Caco-2 (cell line): ENCODE measurements at regions of chr5 and their contacts with region 1.

Region 1: GRCh38 chr5:43120720-43121564 is at the start of gene ZNF131:
- DNase-seq: peak; percentile 95 to 97
- H3K4me3 ChIP-seq: peak within 1 kb of the TSS; percentile 90
- H3K4me3 Mint-ChIP-seq: peak within 1 kb of the TSS; percentile 93
- H3K27ac Mint-ChIP-seq: peak within 1 kb of the TSS; percentile 95
- H3K4me1 ChIP-seq: peaks cover 21% of the 10 kb centered on the region
- H3K4me1 Mint-ChIP-seq: peaks cover 12% of the 10 kb centered on the region
- H3K27me3 ChIP-seq: no peaks in the 10 kb centered on the region
- H3K27me3 Mint-ChIP-seq: peaks cover 3% of the 10 kb centered on the region
- CTCF ChIP-seq: no peak
- total RNA-seq, gene ZNF131: 53.6 and 53.7 TPM in 2 replicates

Region 2: GRCh38 chr5:42908509-42909488 is 212.1 kb before region 1 on chr5:
- CTCF ChIA-PET with region 1: no interaction called
- POLR2A ChIA-PET with region 1: interaction called, 15 read pairs
- intact Hi-C with region 1: loop called (anchors 5 kb)
- DNase-seq: peak; percentile 89 to 90
- H3K4me3 ChIP-seq: peak overlapping the region; percentile 38
- H3K4me3 Mint-ChIP-seq: peak overlapping the region; percentile 97
- H3K27ac Mint-ChIP-seq: peak overlapping the region; percentile 64
- H3K4me1 ChIP-seq: peaks cover 5% of the 10 kb centered on the region; the same call in 1 of the 2 replicates
- H3K4me1 Mint-ChIP-seq: no peaks in the 10 kb centered on the region
- H3K27me3 ChIP-seq: no peaks in the 10 kb centered on the region
- H3K27me3 Mint-ChIP-seq: peaks cover 5% of the 10 kb centered on the region
- CTCF ChIP-seq: peak; percentile 82 to 88

Region 3: GRCh38 chr5:43066799-43067741 is 53.9 kb before region 1 on chr5:
- CTCF ChIA-PET with region 1: interaction called, 11 read pairs
- POLR2A ChIA-PET with region 1: interaction called, 9 read pairs
- intact Hi-C with region 1: loop called (anchors 1 kb)
- DNase-seq: peak; percentile 89 to 90
- H3K4me3 ChIP-seq: peak overlapping the region; percentile 57
- H3K4me3 Mint-ChIP-seq: peak overlapping the region; percentile 88
- H3K27ac Mint-ChIP-seq: peak overlapping the region; percentile 86
- H3K4me1 ChIP-seq: peaks cover 20% of the 10 kb centered on the region
- H3K4me1 Mint-ChIP-seq: peaks cover 19% of the 10 kb centered on the region
- H3K27me3 ChIP-seq: no peaks in the 10 kb centered on the region
- H3K27me3 Mint-ChIP-seq: no peaks in the 10 kb centered on the region
- CTCF ChIP-seq: no peak

Region 4: GRCh38 chr5:43105369-43106289 is 15.3 kb before region 1 on chr5:
- CTCF ChIA-PET with region 1: interaction called, 30 read pairs
- POLR2A ChIA-PET with region 1: interaction called, 7 read pairs
- intact Hi-C with region 1: loop called (anchors 1 kb)
- DNase-seq: peak; percentile 93
- H3K4me3 ChIP-seq: peak overlapping the region; percentile 21
- H3K4me3 Mint-ChIP-seq: peak overlapping the region; percentile 68
- H3K27ac Mint-ChIP-seq: peak overlapping the region; percentile 49
- H3K4me1 ChIP-seq: peaks cover 8% of the 10 kb centered on the region; the same call in 1 of the 2 replicates
- H3K4me1 Mint-ChIP-seq: peaks cover 8% of the 10 kb centered on the region
- H3K27me3 ChIP-seq: no peaks in the 10 kb centered on the region
- H3K27me3 Mint-ChIP-seq: no peaks in the 10 kb centered on the region
- CTCF ChIP-seq: peak; percentile 99 to 100

Region 5: GRCh38 chr5:43244823-43245565 is 124.1 kb after region 1 on chr5:
- CTCF ChIA-PET with region 1: no interaction called
- POLR2A ChIA-PET with region 1: interaction called, 11 read pairs
- intact Hi-C with region 1: no loop called
- DNase-seq: no peak
- H3K4me3 ChIP-seq: no peak overlapping the region
- H3K4me3 Mint-ChIP-seq: no peak overlapping the region
- H3K27ac Mint-ChIP-seq: no peak overlapping the region
- H3K4me1 ChIP-seq: no peaks in the 10 kb centered on the region
- H3K4me1 Mint-ChIP-seq: no peaks in the 10 kb centered on the region
- H3K27me3 ChIP-seq: no peaks in the 10 kb centered on the region
- H3K27me3 Mint-ChIP-seq: peaks cover 9% of the 10 kb centered on the region
- CTCF ChIP-seq: no peak

Region 6: GRCh38 chr5:43389679-43390329 is 268.9 kb after region 1 on chr5:
- CTCF ChIA-PET with region 1: interaction called, 8 read pairs
- POLR2A ChIA-PET with region 1: no interaction called
- intact Hi-C with region 1: loop called (anchors 5 kb)
- DNase-seq: peak; percentile 67 to 86
- H3K4me3 ChIP-seq: no peak overlapping the region
- H3K4me3 Mint-ChIP-seq: no peak overlapping the region
- H3K27ac Mint-ChIP-seq: no peak overlapping the region
- H3K4me1 ChIP-seq: peaks cover 5% of the 10 kb centered on the region; the same call in 1 of the 2 replicates
- H3K4me1 Mint-ChIP-seq: peaks cover 14% of the 10 kb centered on the region
- H3K27me3 ChIP-seq: no peaks in the 10 kb centered on the region
- H3K27me3 Mint-ChIP-seq: no peaks in the 10 kb centered on the region
- CTCF ChIP-seq: peak; percentile 80 to 86